GM12878 (cell line): ENCODE measurements at regions of chr9 and their contacts with region 1.

Region 1: DNA sequence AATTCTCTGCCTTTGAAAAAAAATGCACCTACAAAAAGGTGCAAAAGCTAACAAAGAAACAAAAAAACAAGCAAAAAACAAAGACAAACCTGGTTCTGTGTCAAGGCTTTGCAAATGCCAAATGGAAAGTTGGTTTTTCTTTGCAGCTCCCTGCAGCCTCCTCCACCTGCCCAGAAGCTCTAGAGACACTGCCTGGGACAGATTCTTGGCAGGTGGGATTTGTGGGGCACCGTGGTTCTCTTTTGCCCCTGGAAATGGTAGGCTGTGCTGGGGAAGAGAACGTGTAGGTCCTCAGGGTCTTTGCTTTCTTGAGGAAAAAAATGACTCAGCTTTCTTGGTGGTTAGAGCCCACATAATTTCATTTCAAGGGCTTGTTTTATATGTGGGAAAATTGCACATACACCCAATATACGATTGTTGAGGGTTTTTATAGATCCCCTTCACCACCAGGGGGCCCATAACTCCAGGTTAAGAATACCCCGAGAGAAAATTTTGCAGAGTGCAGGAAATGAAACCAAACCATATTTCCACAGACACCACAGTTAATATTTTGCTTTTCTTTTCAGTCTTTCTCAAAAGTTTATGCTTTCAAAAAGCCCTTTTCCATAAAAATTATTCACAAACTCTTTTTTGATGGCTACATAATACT is 58.7 kb downstream of the NXNL2 start:
- DNase-seq: peak; percentile 20
- ATAC-seq: peak; percentile 89
- H3K4me3 ChIP-seq: no peak overlapping the region
- H3K27ac ChIP-seq: no peak overlapping the region
- H3K4me1 ChIP-seq: no peaks in the 10 kb centered on the region
- H3K27me3 ChIP-seq: 0 out of 4 replicates have a peak, but pooled peaks cover 0 to 3% of the 10 kb centered on the region in 2 experiments
- CTCF ChIP-seq: peak; percentile 45 to 66 (median 61)
- EP300 ChIP-seq: no peak
- POLR2A ChIP-seq: no peak
- RAD21 ChIP-seq: peak; percentile 84

Region 2: DNA sequence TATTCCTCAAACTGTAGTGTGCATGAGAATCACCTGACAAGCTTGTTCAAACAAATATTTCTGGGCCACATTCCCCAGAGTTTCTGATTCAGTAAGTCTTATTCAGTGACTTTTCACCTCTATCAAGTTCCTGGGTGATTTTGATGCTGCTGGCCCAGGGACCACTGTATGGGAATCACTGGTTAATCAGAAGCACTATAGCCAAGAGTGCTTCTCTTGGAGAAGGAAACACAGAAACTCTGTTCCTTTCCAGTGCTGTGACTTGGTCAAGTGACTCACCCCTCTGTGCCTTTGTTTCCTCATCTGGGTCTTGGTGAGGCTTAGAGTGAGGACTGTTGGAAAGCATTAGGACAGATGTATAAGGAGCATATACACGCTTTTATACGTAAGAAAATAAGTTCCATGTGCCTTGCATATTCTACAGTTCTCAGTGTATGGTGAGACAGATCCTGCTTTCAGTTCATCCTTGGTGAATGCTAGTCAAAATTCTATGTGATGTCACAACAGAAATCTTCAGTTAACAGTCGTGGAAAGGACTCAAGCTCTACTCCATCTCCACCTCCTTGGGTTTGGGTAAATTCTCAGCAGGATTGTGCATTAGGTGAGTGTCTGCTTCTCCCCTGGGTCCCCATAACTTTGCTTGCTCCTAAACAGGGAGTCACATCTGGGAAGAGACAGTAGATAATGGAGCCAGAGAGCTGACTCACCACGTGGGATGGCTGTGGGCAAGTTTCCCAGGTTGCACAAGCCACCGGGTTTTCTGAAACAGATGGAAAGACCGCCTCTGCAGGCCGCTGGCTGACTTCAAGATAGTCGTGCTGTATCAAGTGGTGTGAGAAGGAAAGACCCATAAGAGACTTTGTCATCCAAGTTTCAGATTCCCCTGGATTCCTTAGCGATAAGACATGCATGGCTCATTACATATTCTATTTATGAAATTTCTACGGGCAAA is 58.3 kb after region 1 on chr9:
- CTCF ChIA-PET with region 1: interaction called, 3 read pairs
- POLR2A ChIA-PET with region 1: no interaction called
- RAD21 ChIA-PET with region 1: no interaction called
- SMC1A ChIA-PET with region 1: no interaction called
- in situ Hi-C with region 1: loop called (anchors 10 kb)
- intact Hi-C with region 1: no loop called
- DNase-seq: no peak
- ATAC-seq: no peak
- H3K4me3 ChIP-seq: no peak overlapping the region
- H3K27ac ChIP-seq: no peak overlapping the region
- H3K4me1 ChIP-seq: no peaks in the 10 kb centered on the region
- H3K27me3 ChIP-seq: no peaks in the 10 kb centered on the region
- CTCF ChIP-seq: no peak
- EP300 ChIP-seq: no peak
- POLR2A ChIP-seq: no peak
- RAD21 ChIP-seq: no peak

Region 3: GRCh38 chr9:88741335-88741734 is 147.7 kb after region 1 on chr9:
- CTCF ChIA-PET with region 1: no interaction called
- POLR2A ChIA-PET with region 1: no interaction called
- RAD21 ChIA-PET with region 1: no interaction called
- SMC1A ChIA-PET with region 1: no interaction called
- in situ Hi-C with region 1: loop called (anchors 10 kb)
- intact Hi-C with region 1: loop called (anchors 5 kb)
- DNase-seq: no peak
- ATAC-seq: no peak
- H3K4me3 ChIP-seq: no peak overlapping the region
- H3K27ac ChIP-seq: no peak overlapping the region
- H3K4me1 ChIP-seq: no peaks in the 10 kb centered on the region
- H3K27me3 ChIP-seq: no peaks in the 10 kb centered on the region; a peak in 2 of 4 replicates
- CTCF ChIP-seq: peak; percentile 25 to 32 (median 26); a peak in 4 of 6 replicates
- EP300 ChIP-seq: no peak
- POLR2A ChIP-seq: no peak
- RAD21 ChIP-seq: peak; percentile 56

Region 4: GRCh38 chr9:88747768-88748167 is 154.1 kb after region 1 on chr9:
- CTCF ChIA-PET with region 1: no interaction called
- POLR2A ChIA-PET with region 1: no interaction called
- RAD21 ChIA-PET with region 1: no interaction called
- SMC1A ChIA-PET with region 1: no interaction called
- in situ Hi-C with region 1: loop called (anchors 10 kb)
- intact Hi-C with region 1: loop called (anchors 5 kb)
- DNase-seq: no peak
- ATAC-seq: no peak
- H3K4me3 ChIP-seq: no peak overlapping the region
- H3K27ac ChIP-seq: no peak overlapping the region
- H3K4me1 ChIP-seq: no peaks in the 10 kb centered on the region
- H3K27me3 ChIP-seq: peaks cover 0 to 1% of the 10 kb centered on the region in 2 experiments; a peak in 2 of 4 replicates
- CTCF ChIP-seq: no peak
- EP300 ChIP-seq: no peak
- POLR2A ChIP-seq: no peak
- RAD21 ChIP-seq: no peak

Region 5: DNA sequence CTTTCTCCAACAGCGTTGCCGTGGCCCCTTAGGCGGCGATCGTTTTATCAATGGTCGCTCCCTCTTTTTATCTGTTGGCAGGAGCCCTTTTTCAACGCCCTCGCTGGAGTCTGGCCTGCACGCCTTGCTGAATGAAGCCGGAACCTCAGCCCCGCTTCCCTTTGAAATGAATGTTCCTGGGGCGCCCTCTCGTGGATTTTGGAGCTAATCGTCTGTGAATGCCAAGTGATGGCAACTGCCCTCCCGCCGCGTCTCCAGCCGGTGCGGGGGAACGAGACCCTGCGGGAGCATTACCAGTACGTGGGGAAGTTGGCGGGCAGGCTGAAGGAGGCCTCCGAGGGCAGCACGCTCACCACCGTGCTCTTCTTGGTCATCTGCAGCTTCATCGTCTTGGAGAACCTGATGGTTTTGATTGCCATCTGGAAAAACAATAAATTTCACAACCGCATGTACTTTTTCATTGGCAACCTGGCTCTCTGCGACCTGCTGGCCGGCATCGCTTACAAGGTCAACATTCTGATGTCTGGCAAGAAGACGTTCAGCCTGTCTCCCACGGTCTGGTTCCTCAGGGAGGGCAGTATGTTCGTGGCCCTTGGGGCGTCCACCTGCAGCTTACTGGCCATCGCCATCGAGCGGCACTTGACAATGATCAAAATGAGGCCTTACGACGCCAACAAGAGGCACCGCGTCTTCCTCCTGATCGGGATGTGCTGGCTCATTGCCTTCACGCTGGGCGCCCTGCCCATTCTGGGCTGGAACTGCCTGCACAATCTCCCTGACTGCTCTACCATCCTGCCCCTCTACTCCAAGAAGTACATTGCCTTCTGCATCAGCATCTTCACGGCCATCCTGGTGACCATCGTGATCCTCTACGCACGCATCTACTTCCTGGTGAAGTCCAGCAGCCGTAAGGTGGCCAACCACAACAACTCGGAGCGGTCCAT is 407.6 kb after region 1 on chr9:
- CTCF ChIA-PET with region 1: interaction called, 9 read pairs
- POLR2A ChIA-PET with region 1: no interaction called
- RAD21 ChIA-PET with region 1: interaction called, 5 read pairs
- SMC1A ChIA-PET with region 1: interaction called, 4 read pairs
- in situ Hi-C with region 1: loop called (anchors 5 kb)
- intact Hi-C with region 1: loop called (anchors 1 kb)
- DNase-seq: no peak
- ATAC-seq: peak; percentile 91
- H3K4me3 ChIP-seq: no peak overlapping the region
- H3K27ac ChIP-seq: no peak overlapping the region
- H3K4me1 ChIP-seq: no peaks in the 10 kb centered on the region
- H3K27me3 ChIP-seq: peaks cover 0 to 1% of the 10 kb centered on the region in 2 experiments; a peak in 1 of 4 replicates
- CTCF ChIP-seq: peak; percentile 58 to 72 (median 63); a peak in 5 of 6 replicates
- EP300 ChIP-seq: no peak
- POLR2A ChIP-seq: no peak
- RAD21 ChIP-seq: peak; percentile 85

Region 6: GRCh38 chr9:89278997-89279739 is 685.5 kb after region 1 on chr9:
- CTCF ChIA-PET with region 1: interaction called, 4 read pairs
- POLR2A ChIA-PET with region 1: no interaction called
- RAD21 ChIA-PET with region 1: no interaction called
- SMC1A ChIA-PET with region 1: no interaction called
- in situ Hi-C with region 1: loop called (anchors 5 kb)
- intact Hi-C with region 1: loop called (anchors 1 kb)
- DNase-seq: no peak
- ATAC-seq: peak; percentile 74
- H3K4me3 ChIP-seq: no peak overlapping the region
- H3K27ac ChIP-seq: no peak overlapping the region
- H3K4me1 ChIP-seq: peaks cover 3% of the 10 kb centered on the region; the same call in 1 of the 2 replicates
- H3K27me3 ChIP-seq: no peaks in the 10 kb centered on the region
- CTCF ChIP-seq: peak; percentile 62 to 72 (median 67)
- EP300 ChIP-seq: no peak
- POLR2A ChIP-seq: no peak
- RAD21 ChIP-seq: peak; percentile 81